ENCODE measurements at regions of chr20 and their contacts with region 1.

Region 1: GRCh38 chr20:34312544-34313217 is 9.5 kb upstream of the AHCY start:
- DNase-seq: peak; percentile 95
- H3K4me3 ChIP-seq: peak overlapping the region; percentile 26
- H3K27ac ChIP-seq: no peak overlapping the region
- H3K4me1 ChIP-seq: peaks cover 7% of the 10 kb centered on the region
- H3K27me3 ChIP-seq: no peaks in the 10 kb centered on the region
- CTCF ChIP-seq: peak; percentile 99

Region 2: DNA sequence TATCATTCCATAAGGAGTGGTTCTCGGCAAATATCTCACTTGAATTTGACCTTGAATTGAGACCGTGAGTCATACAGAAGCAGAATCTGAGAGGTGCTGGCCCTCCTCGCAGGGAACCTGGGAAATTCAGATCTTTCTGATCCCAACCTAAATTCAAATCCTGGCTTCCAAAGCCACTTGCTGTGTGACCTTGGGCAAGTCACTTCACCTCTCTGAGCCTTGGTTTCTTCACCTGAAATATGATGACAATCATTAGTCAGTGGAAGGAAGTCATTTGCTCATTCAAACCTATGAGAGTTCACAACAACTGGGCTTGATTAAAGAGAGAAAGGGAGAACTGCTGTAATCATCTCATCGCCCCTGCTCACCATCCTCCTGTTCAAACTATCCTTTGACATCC is 1088.3 kb before region 1 on chr20:
- intact Hi-C with region 1: no loop called
- DNase-seq: no peak
- H3K4me3 ChIP-seq: no peak overlapping the region
- H3K27ac ChIP-seq: no peak overlapping the region
- H3K4me1 ChIP-seq: no peaks in the 10 kb centered on the region
- H3K27me3 ChIP-seq: no peaks in the 10 kb centered on the region
- CTCF ChIP-seq: no peak

Region 3: GRCh38 chr20:34435589-34435988 is 122.9 kb after region 1 on chr20:
- intact Hi-C with region 1: no loop called
- DNase-seq: no peak
- H3K4me3 ChIP-seq: no peak overlapping the region
- H3K27ac ChIP-seq: no peak overlapping the region
- H3K4me1 ChIP-seq: no peaks in the 10 kb centered on the region
- H3K27me3 ChIP-seq: no peaks in the 10 kb centered on the region
- CTCF ChIP-seq: no peak

Region 4: GRCh38 chr20:34473262-34473883 is 160.7 kb after region 1 on chr20:
- intact Hi-C with region 1: loop called (anchors 2 kb)
- DNase-seq: peak; percentile 48
- H3K4me3 ChIP-seq: no peak overlapping the region
- H3K27ac ChIP-seq: no peak overlapping the region
- H3K4me1 ChIP-seq: no peaks in the 10 kb centered on the region
- H3K27me3 ChIP-seq: no peaks in the 10 kb centered on the region
- CTCF ChIP-seq: no peak

Region 5: GRCh38 chr20:34522969-34523871 is 210.5 kb after region 1 on chr20:
- intact Hi-C with region 1: loop called (anchors 10 kb)
- DNase-seq: peak; percentile 65
- H3K4me3 ChIP-seq: no peak overlapping the region
- H3K27ac ChIP-seq: peak overlapping the region; percentile 51
- H3K4me1 ChIP-seq: peaks cover 13% of the 10 kb centered on the region
- H3K27me3 ChIP-seq: no peaks in the 10 kb centered on the region
- CTCF ChIP-seq: peak; percentile 24

Measured in colonic mucosa (tissue), 4 donors.